Vagina (tissue), 2 donors: ENCODE measurements at regions of chr5 and their contacts with region 1.

Region 1: DNA sequence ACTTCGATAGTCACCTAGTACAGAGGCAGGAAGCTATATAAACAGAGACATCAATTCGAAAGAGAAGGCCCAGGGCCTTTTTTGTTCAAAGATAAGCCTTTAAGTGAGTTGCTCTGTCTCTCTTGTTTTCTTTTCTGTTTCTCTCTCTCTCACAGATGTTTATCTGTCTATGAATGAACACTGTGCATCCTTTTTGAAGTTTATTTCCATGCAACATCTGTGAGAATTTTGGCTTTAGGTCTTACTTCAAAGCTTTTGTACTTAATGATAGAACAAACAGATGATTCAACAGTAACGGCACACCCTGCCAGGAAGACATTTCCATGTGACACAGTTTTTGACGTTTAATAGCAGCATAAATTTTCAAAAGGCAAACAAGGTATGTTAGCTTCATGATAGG is 1413.1 kb upstream of the CDH6 start:
- DNase-seq: no peak
- H3K4me3 ChIP-seq: no peak overlapping the region
- H3K27ac ChIP-seq: no peak overlapping the region
- H3K4me1 ChIP-seq: no peaks in the 10 kb centered on the region
- H3K27me3 ChIP-seq: no peaks in the 10 kb centered on the region
- CTCF ChIP-seq: no peak
- POLR2A ChIP-seq: no peak

Region 2: GRCh38 chr5:29367176-29367833 is 413.1 kb before region 1 on chr5:
- intact Hi-C with region 1: no loop called
- DNase-seq: no peak
- H3K4me3 ChIP-seq: no peak overlapping the region
- H3K27ac ChIP-seq: no peak overlapping the region
- H3K4me1 ChIP-seq: no peaks in the 10 kb centered on the region
- H3K27me3 ChIP-seq: no peaks in the 10 kb centered on the region
- CTCF ChIP-seq: no peak
- POLR2A ChIP-seq: no peak

Region 3: GRCh38 chr5:29833394-29833793 is 53.0 kb after region 1 on chr5:
- intact Hi-C with region 1: loop called (anchors 10 kb)
- DNase-seq: no peak
- H3K4me3 ChIP-seq: no peak overlapping the region
- H3K27ac ChIP-seq: no peak overlapping the region
- H3K4me1 ChIP-seq: no peaks in the 10 kb centered on the region
- H3K27me3 ChIP-seq: no peaks in the 10 kb centered on the region
- CTCF ChIP-seq: no peak
- POLR2A ChIP-seq: no peak

Region 4: GRCh38 chr5:29845206-29845605 is 64.8 kb after region 1 on chr5:
- intact Hi-C with region 1: no loop called
- DNase-seq: no peak
- H3K4me3 ChIP-seq: no peak overlapping the region
- H3K27ac ChIP-seq: no peak overlapping the region
- H3K4me1 ChIP-seq: no peaks in the 10 kb centered on the region
- H3K27me3 ChIP-seq: no peaks in the 10 kb centered on the region
- CTCF ChIP-seq: no peak
- POLR2A ChIP-seq: no peak